Endothelial cell of umbilical vein (primary cell): ENCODE measurements at regions of chr2 and their contacts with region 1.

Region 1: DNA sequence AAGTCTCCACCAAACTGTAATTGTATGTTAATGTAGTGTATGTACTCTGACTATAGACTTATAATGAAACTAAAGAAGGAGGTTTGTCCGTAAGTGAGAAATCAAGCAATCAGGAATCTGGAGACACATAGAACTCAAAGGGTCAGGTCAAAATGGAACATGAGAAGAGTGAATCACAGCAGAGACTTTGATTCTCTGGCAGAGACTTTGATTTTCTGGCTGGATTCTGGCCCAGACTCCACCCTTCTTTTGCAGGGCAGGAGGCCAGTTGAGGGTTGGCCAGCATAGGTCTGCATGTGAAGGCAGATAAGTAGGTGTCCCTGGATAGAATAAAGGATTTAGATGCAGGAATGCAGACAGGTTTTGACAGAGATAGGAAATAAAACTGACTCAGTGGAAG is 11.0 kb upstream of the NCKAP5 start:
- DNase-seq: peak; percentile 93
- H3K4me3 ChIP-seq: no peak overlapping the region
- H3K27ac ChIP-seq: peak overlapping the region; percentile 45
- H3K4me1 ChIP-seq: peaks cover 40% of the 10 kb centered on the region
- H3K27me3 ChIP-seq: no peaks in the 10 kb centered on the region
- CTCF ChIP-seq: no peak
- POLR2A ChIP-seq: peak; percentile 27

Region 2: GRCh38 chr2:132670496-132671150 is 908.7 kb before region 1 on chr2:
- CTCF ChIA-PET with region 1: no interaction called
- POLR2A ChIA-PET with region 1: no interaction called
- dilution Hi-C with region 1: no loop called
- intact Hi-C with region 1: loop called (anchors 5 kb)
- DNase-seq: peak; percentile 44
- H3K4me3 ChIP-seq: peak overlapping the region; percentile 55 to 76 (median 75)
- H3K27ac ChIP-seq: peak overlapping the region; percentile 69
- H3K4me1 ChIP-seq: peaks cover 30% of the 10 kb centered on the region
- H3K27me3 ChIP-seq: no peaks in the 10 kb centered on the region
- CTCF ChIP-seq: no peak
- POLR2A ChIP-seq: peak; percentile 54

Region 3: GRCh38 chr2:132984731-132985130 is 594.5 kb before region 1 on chr2:
- CTCF ChIA-PET with region 1: no interaction called
- POLR2A ChIA-PET with region 1: no interaction called
- dilution Hi-C with region 1: no loop called
- intact Hi-C with region 1: no loop called
- DNase-seq: no peak
- H3K4me3 ChIP-seq: no peak overlapping the region
- H3K27ac ChIP-seq: no peak overlapping the region
- H3K4me1 ChIP-seq: no peaks in the 10 kb centered on the region
- H3K27me3 ChIP-seq: no peaks in the 10 kb centered on the region
- CTCF ChIP-seq: no peak
- POLR2A ChIP-seq: no peak

Region 4: GRCh38 chr2:133568172-133568571 is 11.1 kb before region 1 on chr2 and contains the start of gene NCKAP5:
- CTCF ChIA-PET with region 1: interaction called, 12 read pairs
- POLR2A ChIA-PET with region 1: no interaction called
- dilution Hi-C with region 1: no loop called
- intact Hi-C with region 1: loop called (anchors 1 kb)
- DNase-seq: peak; percentile 61
- H3K4me3 ChIP-seq: peak within 1 kb of the TSS in 2 of 3 experiments; percentile 0 to 36
- H3K27ac ChIP-seq: no peak within 1 kb of the TSS
- H3K4me1 ChIP-seq: peaks cover 5% of the 10 kb centered on the region
- H3K27me3 ChIP-seq: no peaks in the 10 kb centered on the region
- CTCF ChIP-seq: no peak
- POLR2A ChIP-seq: no peak
- total RNA-seq, gene NCKAP5: 3.0 and 3.3 TPM in 2 replicates

Region 5: GRCh38 chr2:133667085-133667484 is 87.8 kb after region 1 on chr2:
- CTCF ChIA-PET with region 1: no interaction called
- POLR2A ChIA-PET with region 1: no interaction called
- dilution Hi-C with region 1: no loop called
- intact Hi-C with region 1: loop called (anchors 2 kb)
- DNase-seq: peak; percentile 70
- H3K4me3 ChIP-seq: no peak overlapping the region
- H3K27ac ChIP-seq: peak overlapping the region; percentile 75
- H3K4me1 ChIP-seq: peaks cover 10% of the 10 kb centered on the region
- H3K27me3 ChIP-seq: no peaks in the 10 kb centered on the region
- CTCF ChIP-seq: no peak
- POLR2A ChIP-seq: no peak